ENCODE measurements at regions of chr4 and their contacts with region 1.

Region 1: DNA sequence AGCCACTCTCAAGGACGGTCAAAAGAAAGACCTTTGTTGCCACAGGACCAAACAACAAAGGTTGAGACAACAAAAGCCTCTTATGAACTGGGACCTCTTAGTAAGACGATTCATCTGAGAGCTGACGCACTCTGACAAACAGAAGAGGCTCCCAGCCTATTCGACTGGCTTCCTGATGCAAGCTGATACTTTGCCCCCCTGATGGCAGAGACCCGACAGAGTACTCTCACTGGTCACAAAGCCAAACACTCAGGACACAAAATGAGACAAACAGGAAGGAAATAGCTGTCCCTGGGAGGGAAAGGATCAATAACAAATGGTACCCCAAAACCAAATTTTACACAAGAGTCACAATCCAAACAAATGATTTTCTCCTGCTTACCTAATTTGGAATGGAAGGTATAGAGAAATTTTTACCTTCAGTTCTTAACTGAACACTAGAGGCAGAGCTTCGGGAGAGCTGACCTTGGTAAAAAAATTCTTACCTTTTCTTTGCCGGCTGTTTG is 75.2 kb upstream of the PLAC8 start:
- DNase-seq: no peak
- H3K4me3 ChIP-seq: no peak overlapping the region
- H3K4me3 Mint-ChIP-seq: no peak overlapping the region
- H3K27ac ChIP-seq: no peak overlapping the region
- H3K27ac Mint-ChIP-seq: peak overlapping the region in 2 of 7 donors; percentile 45 to 62
- H3K4me1 ChIP-seq: peaks cover 42 to 44% of the 10 kb centered on the region in 2 donors
- H3K4me1 Mint-ChIP-seq: peaks cover 50% of the 10 kb centered on the region
- H3K27me3 ChIP-seq: no peaks in the 10 kb centered on the region
- H3K27me3 Mint-ChIP-seq: peaks cover 0 to 3% (median 0%) of the 10 kb centered on the region in 3 donors
- CTCF ChIP-seq: no peak

Region 2: DNA sequence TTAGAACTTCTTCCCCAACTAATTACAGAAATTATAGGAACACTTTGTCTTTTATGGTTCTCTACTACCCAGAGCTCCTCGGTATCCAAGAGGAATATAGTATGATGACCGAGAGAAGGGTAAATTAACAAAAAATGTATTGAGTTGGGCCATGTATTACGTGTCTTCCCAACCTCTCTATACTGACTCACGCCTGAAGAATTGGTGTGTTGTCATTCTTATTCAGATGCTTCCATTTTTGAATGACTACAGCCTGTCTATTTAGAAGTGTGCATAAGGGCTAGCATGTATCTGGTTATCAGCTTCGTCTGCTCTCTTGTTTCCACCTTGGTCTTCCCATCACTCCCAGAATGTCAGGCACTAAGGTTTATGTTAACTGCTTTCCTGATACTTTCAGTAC is 366.6 kb before region 1 on chr4:
- intact Hi-C with region 1: no loop called
- DNase-seq: no peak
- H3K4me3 ChIP-seq: no peak overlapping the region
- H3K4me3 Mint-ChIP-seq: no peak overlapping the region
- H3K27ac ChIP-seq: no peak overlapping the region
- H3K27ac Mint-ChIP-seq: no peak overlapping the region
- H3K4me1 ChIP-seq: no peaks in the 10 kb centered on the region
- H3K4me1 Mint-ChIP-seq: no peaks in the 10 kb centered on the region
- H3K27me3 ChIP-seq: no peaks in the 10 kb centered on the region
- H3K27me3 Mint-ChIP-seq: peaks cover 0 to 1% (median 0%) of the 10 kb centered on the region in 3 donors
- CTCF ChIP-seq: no peak

Region 3: GRCh38 chr4:83128240-83128929 is 61.3 kb before region 1 on chr4:
- intact Hi-C with region 1: no loop called
- DNase-seq: peak; percentile 71 to 87 (median 82)
- H3K4me3 ChIP-seq: peak overlapping the region in 1 of 3 experiments; percentile 52
- H3K4me3 Mint-ChIP-seq: peak overlapping the region; percentile 69 to 72
- H3K27ac ChIP-seq: peak overlapping the region; percentile 56 to 78
- H3K27ac Mint-ChIP-seq: peak overlapping the region; percentile 73 to 95 (median 92)
- H3K4me1 ChIP-seq: peaks cover 53 to 65% of the 10 kb centered on the region in 2 donors
- H3K4me1 Mint-ChIP-seq: peaks cover 54% of the 10 kb centered on the region
- H3K27me3 ChIP-seq: no peaks in the 10 kb centered on the region
- H3K27me3 Mint-ChIP-seq: peaks cover 0 to 9% (median 0%) of the 10 kb centered on the region in 3 donors
- CTCF ChIP-seq: no peak

Region 4: GRCh38 chr4:83150653-83151330 is 38.9 kb before region 1 on chr4:
- intact Hi-C with region 1: loop called in 1 of 2 experiments (anchors 5 kb)
- DNase-seq: peak in 2 of 3 donors; percentile 44 to 66
- H3K4me3 ChIP-seq: peak overlapping the region in 2 of 3 experiments; percentile 19 to 55
- H3K4me3 Mint-ChIP-seq: peak overlapping the region; percentile 55 to 69
- H3K27ac ChIP-seq: peak overlapping the region; percentile 20 to 74
- H3K27ac Mint-ChIP-seq: peak overlapping the region; percentile 57 to 90 (median 81)
- H3K4me1 ChIP-seq: peaks cover 58 to 62% of the 10 kb centered on the region in 2 donors
- H3K4me1 Mint-ChIP-seq: peaks cover 62% of the 10 kb centered on the region
- H3K27me3 ChIP-seq: no peaks in the 10 kb centered on the region
- H3K27me3 Mint-ChIP-seq: peaks cover 0 to 2% (median 0%) of the 10 kb centered on the region in 3 donors
- CTCF ChIP-seq: no peak

Region 5: DNA sequence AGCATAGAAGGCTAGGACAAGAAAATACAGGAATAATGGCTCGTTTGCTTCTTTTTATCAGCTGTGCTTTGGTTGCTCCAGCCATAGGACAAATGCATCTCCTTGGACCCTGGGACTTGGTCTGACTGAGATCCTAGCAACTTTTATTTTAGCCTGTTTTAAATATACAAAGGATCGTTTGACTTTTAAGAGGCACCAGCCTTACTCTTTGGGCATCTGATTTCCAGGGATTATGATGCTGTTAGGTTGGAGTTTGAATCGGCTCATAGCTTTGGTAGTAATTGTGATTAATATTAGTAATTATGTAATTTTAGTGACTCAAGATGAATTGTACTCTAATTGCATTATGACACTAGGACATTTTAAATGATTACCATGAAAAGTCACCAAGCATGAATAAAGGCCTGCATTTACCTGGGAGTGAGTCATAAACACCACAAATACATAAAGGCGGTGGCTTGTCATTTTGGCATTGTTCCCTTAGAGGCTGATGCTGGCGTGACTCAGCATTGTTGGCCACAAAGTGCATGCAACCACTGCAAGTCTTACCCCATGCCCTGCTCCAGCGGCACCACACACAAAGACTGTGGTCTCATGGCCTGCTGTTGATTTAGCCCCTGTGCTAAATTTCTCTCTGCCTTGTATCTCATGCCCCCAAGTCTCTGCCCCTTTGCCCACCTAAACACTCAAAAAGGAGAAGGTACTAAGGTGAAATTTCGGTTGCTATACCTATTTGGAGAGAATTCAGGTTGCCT is 358.6 kb after region 1 on chr4:
- intact Hi-C with region 1: no loop called
- DNase-seq: peak; percentile 87 to 96 (median 91)
- H3K4me3 ChIP-seq: no peak overlapping the region
- H3K4me3 Mint-ChIP-seq: peak overlapping the region in 1 of 2 donors; percentile 54
- H3K27ac ChIP-seq: peak overlapping the region; percentile 49 to 79
- H3K27ac Mint-ChIP-seq: peak overlapping the region; percentile 79 to 95 (median 89)
- H3K4me1 ChIP-seq: peaks cover 43 to 46% of the 10 kb centered on the region in 2 donors
- H3K4me1 Mint-ChIP-seq: peaks cover 43% of the 10 kb centered on the region
- H3K27me3 ChIP-seq: no peaks in the 10 kb centered on the region
- H3K27me3 Mint-ChIP-seq: peaks cover 0 to 2% (median 2%) of the 10 kb centered on the region in 3 donors
- CTCF ChIP-seq: no peak

Region 6: GRCh38 chr4:83731609-83732008 is 541.9 kb after region 1 on chr4:
- intact Hi-C with region 1: no loop called
- DNase-seq: peak in 1 of 3 donors; percentile 41
- H3K4me3 ChIP-seq: no peak overlapping the region
- H3K4me3 Mint-ChIP-seq: no peak overlapping the region
- H3K27ac ChIP-seq: no peak overlapping the region
- H3K27ac Mint-ChIP-seq: no peak overlapping the region
- H3K4me1 ChIP-seq: no peaks in the 10 kb centered on the region
- H3K4me1 Mint-ChIP-seq: peaks cover 5% of the 10 kb centered on the region
- H3K27me3 ChIP-seq: peaks cover 0 to 2% of the 10 kb centered on the region in 2 donors
- H3K27me3 Mint-ChIP-seq: peaks cover 4 to 15% (median 11%) of the 10 kb centered on the region in 3 donors
- CTCF ChIP-seq: no peak